Left cardiac atrium (tissue), 4 donors: ENCODE measurements at regions of chr12 and their contacts with region 1.

Region 1: DNA sequence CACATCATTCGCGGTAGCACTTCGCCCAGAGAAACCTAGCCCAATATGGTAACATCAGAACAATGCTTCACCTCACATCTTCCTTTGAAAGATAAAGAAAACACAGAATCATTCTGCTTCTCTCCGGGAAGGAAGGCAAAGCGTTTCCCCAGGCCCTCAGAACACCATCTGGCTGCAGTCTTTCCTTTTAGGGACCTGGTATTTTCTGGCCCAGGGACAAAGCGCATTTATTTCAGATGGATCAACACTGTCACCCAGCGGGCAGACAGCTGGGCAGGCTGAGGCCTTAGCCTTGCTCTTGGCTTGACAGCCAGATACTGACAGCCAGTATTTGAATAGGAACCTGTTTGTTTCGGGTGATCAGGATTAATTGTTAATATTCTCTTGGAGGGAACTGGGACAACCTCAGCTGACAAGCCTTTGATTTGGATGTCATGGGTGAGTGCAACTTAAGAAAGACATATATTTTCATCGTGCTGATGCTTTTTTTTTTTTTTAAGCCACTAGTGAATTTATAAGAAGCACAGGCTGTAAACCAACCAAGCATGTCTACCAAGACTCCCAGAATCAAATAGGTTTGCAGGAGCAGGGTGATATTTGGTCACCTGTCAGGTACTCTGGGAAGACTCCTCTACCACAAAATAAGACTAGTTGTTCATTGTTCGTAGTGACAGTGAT is 118.9 kb downstream of the VEZT start:
- DNase-seq: peak; percentile 66
- ATAC-seq: peak; percentile 93 to 95

Region 2: GRCh38 chr12:95532851-95533250 is 196.3 kb after region 1 on chr12:
- intact Hi-C with region 1: loop called in 1 of 2 experiments (anchors 5 kb)
- DNase-seq: no peak
- ATAC-seq: peak in 1 of 2 donors; percentile 83